CD4-positive, alpha-beta T cell (primary cell): ENCODE measurements at regions of chr1 and their contacts with region 1.

Region 1: GRCh38 chr1:235415008-235415904 is 48.0 kb downstream of the TBCE start:
- DNase-seq: peak; percentile 39 to 78 (median 51)
- ATAC-seq: peak; percentile 88
- H3K4me3 ChIP-seq: no peak overlapping the region
- H3K4me3 Mint-ChIP-seq: no peak overlapping the region
- H3K27ac ChIP-seq: no peak overlapping the region
- H3K27ac Mint-ChIP-seq: no peak overlapping the region
- H3K4me1 ChIP-seq: no peaks in the 10 kb centered on the region
- H3K4me1 Mint-ChIP-seq: peaks cover 10% of the 10 kb centered on the region
- H3K27me3 ChIP-seq: no peaks in the 10 kb centered on the region
- H3K27me3 Mint-ChIP-seq: no peaks in the 10 kb centered on the region
- CTCF ChIP-seq: peak; percentile 84

Region 2: GRCh38 chr1:234499119-234499942 is 915.9 kb before region 1 on chr1:
- CTCF ChIA-PET with region 1: no interaction called
- POLR2A ChIA-PET with region 1: no interaction called
- intact Hi-C with region 1: loop called in 1 of 2 experiments (anchors 5 kb)
- DNase-seq: peak; percentile 67 to 89 (median 79)
- ATAC-seq: peak; percentile 99
- H3K4me3 ChIP-seq: no peak overlapping the region
- H3K4me3 Mint-ChIP-seq: no peak overlapping the region
- H3K27ac ChIP-seq: no peak overlapping the region
- H3K27ac Mint-ChIP-seq: no peak overlapping the region
- H3K4me1 ChIP-seq: peaks cover 10% of the 10 kb centered on the region
- H3K4me1 Mint-ChIP-seq: peaks cover 8% of the 10 kb centered on the region
- H3K27me3 ChIP-seq: no peaks in the 10 kb centered on the region
- H3K27me3 Mint-ChIP-seq: no peaks in the 10 kb centered on the region
- CTCF ChIP-seq: peak; percentile 88

Region 3: DNA sequence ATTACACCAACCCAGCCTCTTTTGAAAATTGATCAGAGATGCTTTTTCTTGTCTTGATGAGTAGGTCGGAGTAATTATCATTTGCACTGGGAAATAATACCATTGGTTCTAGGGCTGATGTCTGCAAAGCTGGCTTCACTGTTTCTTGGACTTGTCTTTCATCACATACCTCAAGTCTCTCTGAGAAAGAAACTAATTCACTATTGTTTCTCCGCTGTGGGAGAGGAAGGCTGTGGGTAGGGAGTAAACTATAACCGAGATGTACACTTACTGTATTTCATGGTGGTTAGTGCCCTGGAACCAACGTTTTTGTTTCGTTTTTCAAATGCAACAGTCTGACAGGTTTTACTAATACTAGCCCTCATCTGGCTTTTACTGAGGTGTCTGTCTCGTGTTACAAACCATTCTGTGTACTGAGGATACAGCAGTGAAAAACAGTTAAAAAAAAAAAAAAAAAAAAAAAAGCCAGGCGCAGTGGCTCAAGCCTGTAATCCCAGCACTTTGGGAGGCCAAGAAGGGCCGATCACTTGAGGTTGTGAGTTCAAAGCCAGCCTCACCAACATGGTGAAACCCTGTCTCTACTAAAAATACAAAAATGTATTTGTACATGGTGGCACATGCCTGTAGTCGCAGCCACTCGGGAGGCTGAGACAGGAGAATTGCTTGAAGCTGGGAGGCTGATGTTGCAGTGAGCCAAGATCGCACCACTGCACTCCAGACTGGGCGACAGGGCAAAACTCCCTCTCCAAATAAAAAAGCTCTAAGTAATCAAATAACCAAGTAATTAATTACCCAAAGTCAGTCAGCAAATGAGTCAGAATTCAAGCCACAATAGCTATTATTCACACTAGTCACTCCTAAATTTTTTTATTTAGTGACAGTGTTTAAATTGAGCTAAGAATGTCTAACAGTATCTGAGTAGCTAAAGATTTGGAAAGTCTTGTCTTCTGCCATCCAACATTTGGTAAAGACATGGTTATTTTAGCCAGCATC is 309.9 kb before region 1 on chr1:
- CTCF ChIA-PET with region 1: interaction called, 7 read pairs
- POLR2A ChIA-PET with region 1: no interaction called
- intact Hi-C with region 1: loop called in 1 of 2 experiments (anchors 1 kb)
- DNase-seq: peak in 3 of 14 experiments; percentile 38 to 66 (median 47)
- ATAC-seq: no peak
- H3K4me3 ChIP-seq: peak overlapping the region; percentile 40
- H3K4me3 Mint-ChIP-seq: peak overlapping the region; percentile 85
- H3K27ac ChIP-seq: no peak overlapping the region
- H3K27ac Mint-ChIP-seq: peak overlapping the region; percentile 51
- H3K4me1 ChIP-seq: peaks cover 25% of the 10 kb centered on the region
- H3K4me1 Mint-ChIP-seq: peaks cover 41% of the 10 kb centered on the region
- H3K27me3 ChIP-seq: no peaks in the 10 kb centered on the region
- H3K27me3 Mint-ChIP-seq: no peaks in the 10 kb centered on the region
- CTCF ChIP-seq: no peak

Region 4: GRCh38 chr1:235259133-235259778 is 156.0 kb before region 1 on chr1:
- CTCF ChIA-PET with region 1: interaction called, 11 read pairs
- POLR2A ChIA-PET with region 1: no interaction called
- intact Hi-C with region 1: no loop called
- DNase-seq: peak in 3 of 14 experiments; percentile 32 to 36 (median 35)
- ATAC-seq: peak; percentile 57
- H3K4me3 ChIP-seq: no peak overlapping the region
- H3K4me3 Mint-ChIP-seq: peak overlapping the region; percentile 31
- H3K27ac ChIP-seq: no peak overlapping the region
- H3K27ac Mint-ChIP-seq: peak overlapping the region; percentile 35
- H3K4me1 ChIP-seq: peaks cover 17% of the 10 kb centered on the region
- H3K4me1 Mint-ChIP-seq: peaks cover 82% of the 10 kb centered on the region
- H3K27me3 ChIP-seq: no peaks in the 10 kb centered on the region
- H3K27me3 Mint-ChIP-seq: no peaks in the 10 kb centered on the region
- CTCF ChIP-seq: no peak

Region 5: DNA sequence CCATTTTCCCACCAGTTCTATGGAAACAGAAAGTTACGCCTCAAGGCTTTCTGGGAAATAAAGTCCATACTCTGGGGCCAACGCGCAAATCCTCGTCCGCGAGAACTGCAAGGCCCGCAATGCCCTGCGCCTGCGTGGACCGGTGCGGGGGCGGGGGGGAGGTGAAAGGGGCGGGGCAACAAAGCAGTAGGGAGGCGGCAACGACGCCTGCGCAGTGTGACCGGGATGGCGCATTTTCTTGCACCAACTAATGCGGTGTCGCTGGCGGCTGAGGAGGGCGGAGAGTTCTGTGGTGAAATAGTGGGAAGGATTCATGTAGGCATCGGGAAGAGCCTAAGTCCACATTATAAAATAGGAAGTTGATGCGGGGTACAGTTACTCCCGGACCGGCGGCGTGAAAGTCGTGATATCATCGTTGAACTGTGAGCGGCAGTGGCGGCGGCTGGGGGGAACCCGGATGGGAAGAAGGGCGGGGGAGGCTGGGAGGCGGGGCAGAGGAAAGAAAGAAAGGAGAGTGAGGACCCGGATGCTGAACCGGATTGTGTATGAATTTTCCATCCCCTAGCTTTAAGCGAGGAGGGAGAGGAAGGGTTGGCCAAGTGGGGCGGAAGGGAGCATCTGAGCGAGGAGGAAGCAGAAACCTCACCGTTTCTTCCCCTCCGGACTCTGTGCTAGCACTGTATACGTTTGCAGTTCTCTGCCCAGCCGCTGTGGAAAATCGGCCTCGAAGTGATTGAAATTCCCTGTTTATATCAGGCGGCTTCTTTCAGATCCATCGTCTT is 86.7 kb before region 1 on chr1 and contains the start of gene GGPS1:
- CTCF ChIA-PET with region 1: interaction called, 9 read pairs
- POLR2A ChIA-PET with region 1: interaction called, 3 read pairs
- intact Hi-C with region 1: loop called (anchors 2 to 5 kb)
- DNase-seq: peak; percentile 96 to 100 (median 99)
- ATAC-seq: peak; percentile 78
- H3K4me3 ChIP-seq: peak within 1 kb of the TSS; percentile 97
- H3K4me3 Mint-ChIP-seq: no peak within 1 kb of the TSS
- H3K27ac ChIP-seq: peak within 1 kb of the TSS; percentile 96 to 98
- H3K27ac Mint-ChIP-seq: no peak within 1 kb of the TSS
- H3K4me1 ChIP-seq: peaks cover 16% of the 10 kb centered on the region
- H3K4me1 Mint-ChIP-seq: peaks cover 23% of the 10 kb centered on the region
- H3K27me3 ChIP-seq: no peaks in the 10 kb centered on the region
- H3K27me3 Mint-ChIP-seq: no peaks in the 10 kb centered on the region
- CTCF ChIP-seq: peak; percentile 34
- total RNA-seq, gene GGPS1: 20.6 to 20.9 TPM

Region 6: GRCh38 chr1:235367000-235367908 is 48.0 kb before region 1 on chr1 and contains the start of gene TBCE:
- CTCF ChIA-PET with region 1: no interaction called
- POLR2A ChIA-PET with region 1: interaction called, 6 read pairs
- intact Hi-C with region 1: loop called in 1 of 2 experiments (anchors 5 kb)
- DNase-seq: peak; percentile 55 to 91 (median 76)
- ATAC-seq: peak; percentile 96
- H3K4me3 ChIP-seq: peak within 1 kb of the TSS; percentile 84
- H3K4me3 Mint-ChIP-seq: peak within 1 kb of the TSS; percentile 99
- H3K27ac ChIP-seq: peak within 1 kb of the TSS; percentile 48 to 70
- H3K27ac Mint-ChIP-seq: peak within 1 kb of the TSS; percentile 89
- H3K4me1 ChIP-seq: peaks cover 11% of the 10 kb centered on the region
- H3K4me1 Mint-ChIP-seq: peaks cover 37% of the 10 kb centered on the region
- H3K27me3 ChIP-seq: no peaks in the 10 kb centered on the region
- H3K27me3 Mint-ChIP-seq: no peaks in the 10 kb centered on the region
- CTCF ChIP-seq: no peak
- total RNA-seq, gene TBCE: 7.0 to 8.4 TPM

Region 7: GRCh38 chr1:235430991-235431390 is 15.7 kb after region 1 on chr1:
- CTCF ChIA-PET with region 1: no interaction called
- POLR2A ChIA-PET with region 1: no interaction called
- intact Hi-C with region 1: no loop called
- DNase-seq: no peak
- ATAC-seq: no peak
- H3K4me3 ChIP-seq: no peak overlapping the region
- H3K4me3 Mint-ChIP-seq: no peak overlapping the region
- H3K27ac ChIP-seq: no peak overlapping the region
- H3K27ac Mint-ChIP-seq: no peak overlapping the region
- H3K4me1 ChIP-seq: no peaks in the 10 kb centered on the region
- H3K4me1 Mint-ChIP-seq: peaks cover under 1% of the 10 kb centered on the region
- H3K27me3 ChIP-seq: no peaks in the 10 kb centered on the region
- H3K27me3 Mint-ChIP-seq: no peaks in the 10 kb centered on the region
- CTCF ChIP-seq: no peak